ENCODE measurements at regions of chr3 and their contacts with region 1.

Region 1: DNA sequence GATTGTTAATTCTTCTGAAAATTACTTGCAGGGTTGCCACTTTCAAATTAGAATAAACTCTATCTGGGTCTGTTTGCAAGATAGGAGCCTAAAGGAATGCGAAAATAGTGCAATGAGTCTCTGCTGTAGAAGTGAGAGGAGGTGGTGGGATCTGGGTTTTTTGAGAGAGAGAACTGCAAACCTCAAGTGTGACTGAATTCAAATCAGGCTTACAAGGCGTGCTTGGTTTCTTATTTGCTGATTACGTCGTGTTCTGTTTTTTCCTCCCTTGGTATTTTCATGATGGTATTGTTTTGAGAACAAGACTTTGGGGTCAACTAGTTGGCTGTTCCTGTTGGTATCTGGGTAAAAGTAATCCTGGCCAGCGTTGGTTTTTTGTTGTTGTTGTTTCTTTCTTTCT is 490.9 kb upstream of the CFAP20DC start:
- DNase-seq: no peak
- ATAC-seq: no peak
- H3K4me3 ChIP-seq: no peak overlapping the region
- H3K27ac ChIP-seq: no peak overlapping the region
- H3K4me1 ChIP-seq: no peaks in the 10 kb centered on the region
- H3K27me3 ChIP-seq: no peaks in the 10 kb centered on the region
- CTCF ChIP-seq: no peak

Region 2: GRCh38 chr3:59212128-59212779 is 328.4 kb before region 1 on chr3:
- CTCF ChIA-PET with region 1: no interaction called
- POLR2A ChIA-PET with region 1: no interaction called
- in situ Hi-C with region 1: no loop called
- intact Hi-C with region 1: loop called (anchors 10 kb)
- DNase-seq: peak; percentile 10
- ATAC-seq: peak; percentile 80
- H3K4me3 ChIP-seq: no peak overlapping the region
- H3K27ac ChIP-seq: no peak overlapping the region
- H3K4me1 ChIP-seq: no peaks in the 10 kb centered on the region
- H3K27me3 ChIP-seq: no peaks in the 10 kb centered on the region
- CTCF ChIP-seq: peak; percentile 45; the same call in 1 of the 2 replicates

Measured in Panc1 (cell line).